ENCODE measurements at regions of chr1 and their contacts with region 1.

Region 1: DNA sequence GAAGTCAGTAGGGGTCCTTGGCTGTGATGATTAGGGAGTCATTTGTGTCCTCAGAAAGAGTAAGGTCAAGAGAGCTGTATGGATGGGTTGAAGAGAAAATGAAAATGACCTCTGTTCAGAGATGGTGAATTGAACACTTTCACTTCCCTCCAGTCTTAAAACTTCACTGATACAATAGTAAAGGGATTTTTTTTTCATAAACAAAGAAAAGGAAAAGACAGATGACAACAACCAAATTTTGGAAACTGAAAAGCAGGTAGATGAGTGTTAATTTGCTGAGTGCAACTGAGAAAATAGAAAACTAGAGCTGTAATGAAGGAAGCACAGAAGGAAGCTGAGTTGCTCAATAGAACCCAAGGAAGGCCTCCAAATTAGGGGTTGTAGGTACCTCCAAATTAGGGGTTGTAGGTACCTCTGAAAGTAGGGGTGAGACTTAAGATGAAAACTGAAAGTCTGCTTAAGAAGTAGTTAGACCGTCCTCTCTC is 14.8 kb upstream of the S1PR1 start:
- DNase-seq: no peak
- H3K4me3 ChIP-seq: no peak overlapping the region
- H3K27ac ChIP-seq: no peak overlapping the region
- H3K4me1 ChIP-seq: no peaks in the 10 kb centered on the region
- H3K27me3 ChIP-seq: no peaks in the 10 kb centered on the region
- CTCF ChIP-seq: no peak
- POLR2A ChIP-seq: no peak

Region 2: DNA sequence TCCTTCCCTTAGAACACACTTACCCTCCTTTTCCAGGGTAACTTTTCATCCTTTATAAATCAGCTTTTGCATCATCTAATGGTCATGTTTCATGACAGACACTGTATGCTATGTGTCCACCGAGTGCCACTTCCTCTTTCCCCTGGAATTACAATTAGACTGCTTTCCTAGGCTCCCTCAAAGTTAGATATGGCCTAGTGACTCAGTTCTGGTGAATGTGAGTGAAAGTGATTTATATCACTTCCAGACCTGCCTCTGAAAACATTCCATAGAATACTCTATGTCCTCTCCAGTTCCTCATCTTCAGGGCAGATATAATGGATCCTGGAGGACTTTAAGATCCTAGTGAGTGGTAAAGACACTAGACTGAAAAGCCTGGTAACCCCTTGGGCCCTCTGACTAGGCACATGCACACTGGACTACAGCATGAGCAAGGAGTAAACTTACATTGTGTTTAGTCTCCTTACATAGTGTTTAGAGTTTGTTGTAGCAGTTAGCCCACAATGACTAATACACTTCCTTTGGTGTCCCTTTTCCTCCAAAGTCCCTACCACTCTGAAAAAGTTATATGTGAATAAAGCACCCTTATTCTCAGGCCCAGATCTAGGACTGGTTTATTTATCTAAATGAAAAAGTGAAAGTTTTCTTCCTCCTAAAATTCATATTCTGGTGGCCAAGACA is 624.8 kb before region 1 on chr1:
- intact Hi-C with region 1: loop called (anchors 10 kb)
- DNase-seq: no peak
- H3K4me3 ChIP-seq: no peak overlapping the region
- H3K27ac ChIP-seq: no peak overlapping the region
- H3K4me1 ChIP-seq: no peaks in the 10 kb centered on the region
- H3K27me3 ChIP-seq: no peaks in the 10 kb centered on the region
- CTCF ChIP-seq: no peak
- POLR2A ChIP-seq: no peak

Region 3: GRCh38 chr1:101207891-101208290 is 14.1 kb before region 1 on chr1:
- intact Hi-C with region 1: loop called (anchors 1 kb)
- DNase-seq: no peak
- H3K4me3 ChIP-seq: no peak overlapping the region
- H3K27ac ChIP-seq: no peak overlapping the region
- H3K4me1 ChIP-seq: no peaks in the 10 kb centered on the region
- H3K27me3 ChIP-seq: no peaks in the 10 kb centered on the region
- CTCF ChIP-seq: no peak
- POLR2A ChIP-seq: no peak